ENCODE measurements at regions of chr5 and their contacts with region 1.

Region 1: DNA sequence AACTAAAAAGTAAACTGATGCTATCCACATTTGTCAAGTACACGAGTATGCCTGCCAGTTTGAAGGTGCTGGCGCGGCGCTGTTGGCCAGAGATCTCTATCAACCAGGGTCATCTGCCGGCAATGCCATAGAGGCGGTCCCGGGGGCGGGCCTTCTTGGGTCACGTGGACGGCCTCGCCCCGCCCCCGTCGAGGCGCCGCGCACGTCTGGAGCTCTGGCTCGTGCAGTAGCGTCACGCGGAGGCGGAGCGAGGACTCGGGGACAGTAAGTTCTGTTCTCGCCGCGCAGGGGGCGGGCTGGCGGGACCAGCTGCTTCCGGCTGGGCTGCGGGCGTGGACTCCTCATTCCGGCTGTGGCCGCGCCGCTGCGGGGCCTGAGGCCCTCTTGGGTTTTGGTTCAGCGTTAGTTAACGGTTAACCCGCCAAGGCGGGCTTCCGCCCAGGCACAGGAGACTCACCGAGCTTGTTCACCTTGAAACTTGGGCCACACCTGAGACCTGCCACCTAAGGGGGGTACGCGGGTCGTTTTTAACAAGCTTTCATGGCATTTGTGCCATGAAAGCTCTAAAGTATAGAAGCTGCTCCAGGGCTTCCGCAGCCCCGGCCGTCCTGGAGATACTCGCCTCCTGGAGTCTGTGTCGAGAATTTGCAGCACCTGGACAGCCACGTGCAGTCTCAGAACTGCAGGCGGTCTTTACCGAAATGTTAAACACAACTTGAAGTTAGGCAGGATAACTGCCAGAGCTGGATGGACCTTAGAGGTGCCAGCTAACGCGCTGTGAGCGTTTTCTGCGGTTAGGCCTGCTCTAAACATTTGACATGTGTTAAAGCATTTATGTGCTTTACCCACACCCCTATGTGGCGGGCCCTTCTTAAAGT is at the start of gene RFESD:
- DNase-seq: peak; percentile 98 to 100
- ATAC-seq: peak; percentile 82 to 83
- H3K4me3 ChIP-seq: peak within 1 kb of the TSS; percentile 62 to 71 (median 66)
- H3K27ac ChIP-seq: peak within 1 kb of the TSS; percentile 95 to 99 (median 97)
- H3K4me1 ChIP-seq: peaks cover 16 to 39% of the 10 kb centered on the region in 2 donors
- H3K27me3 ChIP-seq: no peaks in the 10 kb centered on the region
- CTCF ChIP-seq: peak in 2 of 5 experiments; percentile 19 to 29
- POLR2A ChIP-seq: peak; percentile 96 to 98
- total RNA-seq, gene RFESD: 0.89 to 2.9 (median 1.6) TPM

Region 2: GRCh38 chr5:95486191-95486590 is 160.6 kb before region 1 on chr5:
- in situ Hi-C with region 1: no loop called
- intact Hi-C with region 1: no loop called
- DNase-seq: no peak
- ATAC-seq: no peak
- H3K4me3 ChIP-seq: no peak overlapping the region
- H3K27ac ChIP-seq: no peak overlapping the region
- H3K4me1 ChIP-seq: no peaks in the 10 kb centered on the region
- H3K27me3 ChIP-seq: no peaks in the 10 kb centered on the region
- CTCF ChIP-seq: no peak
- POLR2A ChIP-seq: no peak

Region 3: GRCh38 chr5:95697781-95698681 is 51.2 kb after region 1 on chr5:
- in situ Hi-C with region 1: no loop called
- intact Hi-C with region 1: no loop called
- DNase-seq: no peak
- ATAC-seq: no peak
- H3K4me3 ChIP-seq: no peak overlapping the region
- H3K27ac ChIP-seq: no peak overlapping the region
- H3K4me1 ChIP-seq: no peaks in the 10 kb centered on the region
- H3K27me3 ChIP-seq: no peaks in the 10 kb centered on the region
- CTCF ChIP-seq: no peak
- POLR2A ChIP-seq: no peak

Region 4: DNA sequence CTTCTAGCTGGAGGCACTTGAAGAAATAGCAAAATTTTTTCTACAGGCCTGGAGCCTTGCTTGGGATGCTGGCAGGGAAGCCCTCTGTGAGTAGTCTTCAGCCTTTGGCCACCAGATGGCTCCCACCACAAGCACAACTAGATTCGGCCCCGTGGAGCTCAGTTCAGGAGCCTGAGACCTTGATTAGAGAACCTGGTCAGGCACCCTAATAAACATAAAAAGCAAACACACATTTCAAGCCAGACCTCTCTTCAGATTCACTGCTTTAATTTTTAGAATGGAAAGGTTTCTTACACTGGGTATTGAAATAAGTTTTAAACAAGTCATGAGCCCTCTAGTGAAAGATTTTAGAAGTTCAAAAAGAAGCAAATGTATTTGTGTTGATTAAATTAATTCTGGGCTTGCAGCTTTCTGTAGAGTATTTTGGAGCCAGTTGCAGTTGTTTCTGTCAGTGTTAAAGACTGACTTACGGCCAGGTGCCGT is 134.3 kb after region 1 on chr5:
- in situ Hi-C with region 1: no loop called
- intact Hi-C with region 1: loop called (anchors 2 kb)
- DNase-seq: peak; percentile 77 to 88
- ATAC-seq: peak; percentile 75 to 87
- H3K4me3 ChIP-seq: no peak overlapping the region
- H3K27ac ChIP-seq: peak overlapping the region; percentile 76 to 85 (median 83)
- H3K4me1 ChIP-seq: peaks cover 18 to 72% of the 10 kb centered on the region in 2 donors
- H3K27me3 ChIP-seq: no peaks in the 10 kb centered on the region
- CTCF ChIP-seq: peak; percentile 87 to 95 (median 89)
- POLR2A ChIP-seq: no peak

Region 5: DNA sequence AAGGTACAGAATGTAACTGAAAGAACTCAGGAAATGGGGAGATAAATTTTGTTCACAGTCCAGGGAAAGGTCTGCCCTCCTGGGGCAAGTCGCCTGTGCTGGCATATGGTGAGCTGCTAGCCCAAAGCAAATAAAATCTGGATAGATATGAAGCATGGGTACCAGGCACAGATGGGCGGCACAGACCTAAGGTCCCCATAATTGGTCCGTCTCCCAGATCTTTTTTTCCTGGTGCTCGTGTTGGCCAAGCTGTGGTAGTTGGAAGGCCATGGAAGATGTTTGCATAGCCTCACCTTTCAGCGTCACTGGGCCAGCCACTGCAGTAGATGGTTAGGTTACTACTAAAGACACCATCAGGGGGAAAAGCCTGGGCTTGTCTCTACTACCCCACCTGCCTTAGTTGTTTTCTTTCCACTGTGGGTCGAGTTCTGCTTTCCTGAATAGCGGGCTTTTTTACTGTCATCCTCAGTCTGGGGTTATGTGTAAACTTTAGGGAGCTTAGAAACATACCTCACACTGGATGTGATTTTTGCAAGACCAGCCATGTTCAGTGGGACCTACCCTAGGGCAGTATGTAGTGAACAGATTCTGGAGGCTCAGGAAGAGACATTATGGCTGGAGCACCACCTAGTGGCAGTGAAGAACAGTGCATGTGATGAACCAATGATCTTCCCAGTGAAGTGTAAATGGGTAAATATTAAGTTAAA is 199.9 kb after region 1 on chr5:
- in situ Hi-C with region 1: no loop called
- intact Hi-C with region 1: loop called (anchors 2 kb)
- DNase-seq: peak in 1 of 2 donors; percentile 68
- ATAC-seq: peak; percentile 43 to 56
- H3K4me3 ChIP-seq: peak overlapping the region in 3 of 4 donors; percentile 8 to 59 (median 52)
- H3K27ac ChIP-seq: peak overlapping the region; percentile 84 to 92 (median 88)
- H3K4me1 ChIP-seq: peaks cover 19 to 30% of the 10 kb centered on the region in 2 donors
- H3K27me3 ChIP-seq: no peaks in the 10 kb centered on the region
- CTCF ChIP-seq: peak; percentile 92 to 97 (median 94)
- POLR2A ChIP-seq: no peak

Region 6: DNA sequence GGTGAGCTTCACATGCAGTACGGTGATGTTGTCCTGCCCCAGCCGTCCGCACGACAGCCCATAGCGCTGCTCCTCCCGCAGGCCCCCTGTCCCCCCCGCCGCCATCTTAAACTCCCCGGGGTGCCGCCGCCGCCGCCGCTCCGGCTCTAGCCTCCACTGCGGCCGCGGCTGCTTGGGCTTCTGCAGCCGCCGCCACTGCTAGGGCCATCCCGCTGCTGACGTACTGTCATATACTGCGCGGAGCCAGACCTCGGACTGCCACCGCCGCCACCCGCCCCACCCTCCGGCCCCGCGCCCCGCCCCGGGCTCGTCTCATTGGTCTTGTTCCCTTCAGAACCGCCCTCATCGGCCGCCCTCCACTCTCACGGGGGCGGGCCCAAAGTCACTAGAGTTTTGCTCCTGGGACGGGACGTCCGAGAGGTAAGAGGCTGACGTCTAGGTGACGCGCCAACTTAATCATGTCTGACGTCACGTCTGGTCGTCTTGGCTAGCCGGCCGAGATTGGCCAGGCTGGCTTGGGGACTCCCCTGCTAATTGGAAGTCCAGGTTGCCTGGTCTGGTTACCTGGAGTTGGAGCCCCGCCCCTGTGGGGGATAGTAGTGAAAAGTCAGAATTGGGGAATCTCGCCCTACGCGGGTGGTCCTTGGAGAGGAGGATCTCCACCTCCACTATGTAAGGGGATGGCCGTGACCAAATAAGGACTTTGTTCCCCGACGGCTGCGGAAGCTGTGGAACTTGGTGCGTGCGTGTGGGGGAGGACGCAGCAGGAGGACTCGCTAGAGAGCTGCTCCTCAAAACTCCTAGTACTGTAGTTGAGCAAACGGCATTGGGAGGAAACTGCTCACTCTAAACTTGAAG is 315.1 kb after region 1 on chr5 and contains the start of gene ELL2:
- in situ Hi-C with region 1: loop called in 2 of 4 experiments (anchors 25 kb)
- intact Hi-C with region 1: loop called (anchors 2 kb)
- DNase-seq: peak; percentile 96 to 98
- ATAC-seq: peak; percentile 77 to 80
- H3K4me3 ChIP-seq: peak within 1 kb of the TSS; percentile 76 to 97 (median 89)
- H3K27ac ChIP-seq: peak within 1 kb of the TSS; percentile 91 to 99 (median 98)
- H3K4me1 ChIP-seq: peaks cover 17 to 26% of the 10 kb centered on the region in 2 donors
- H3K27me3 ChIP-seq: no peaks in the 10 kb centered on the region
- CTCF ChIP-seq: no peak
- POLR2A ChIP-seq: peak; percentile 91 to 95
- total RNA-seq, gene ELL2: 35.2 to 64.5 (median 42.9) TPM

Region 7: GRCh38 chr5:96601811-96602244 is 955.0 kb after region 1 on chr5:
- in situ Hi-C with region 1: no loop called
- intact Hi-C with region 1: loop called (anchors 10 kb)
- DNase-seq: peak in 1 of 2 donors; percentile 22
- ATAC-seq: peak; percentile 87 to 90
- H3K4me3 ChIP-seq: no peak overlapping the region
- H3K27ac ChIP-seq: no peak overlapping the region
- H3K4me1 ChIP-seq: no peaks in the 10 kb centered on the region
- H3K27me3 ChIP-seq: no peaks in the 10 kb centered on the region
- CTCF ChIP-seq: peak; percentile 63 to 86 (median 75)
- POLR2A ChIP-seq: no peak

Region 8: DNA sequence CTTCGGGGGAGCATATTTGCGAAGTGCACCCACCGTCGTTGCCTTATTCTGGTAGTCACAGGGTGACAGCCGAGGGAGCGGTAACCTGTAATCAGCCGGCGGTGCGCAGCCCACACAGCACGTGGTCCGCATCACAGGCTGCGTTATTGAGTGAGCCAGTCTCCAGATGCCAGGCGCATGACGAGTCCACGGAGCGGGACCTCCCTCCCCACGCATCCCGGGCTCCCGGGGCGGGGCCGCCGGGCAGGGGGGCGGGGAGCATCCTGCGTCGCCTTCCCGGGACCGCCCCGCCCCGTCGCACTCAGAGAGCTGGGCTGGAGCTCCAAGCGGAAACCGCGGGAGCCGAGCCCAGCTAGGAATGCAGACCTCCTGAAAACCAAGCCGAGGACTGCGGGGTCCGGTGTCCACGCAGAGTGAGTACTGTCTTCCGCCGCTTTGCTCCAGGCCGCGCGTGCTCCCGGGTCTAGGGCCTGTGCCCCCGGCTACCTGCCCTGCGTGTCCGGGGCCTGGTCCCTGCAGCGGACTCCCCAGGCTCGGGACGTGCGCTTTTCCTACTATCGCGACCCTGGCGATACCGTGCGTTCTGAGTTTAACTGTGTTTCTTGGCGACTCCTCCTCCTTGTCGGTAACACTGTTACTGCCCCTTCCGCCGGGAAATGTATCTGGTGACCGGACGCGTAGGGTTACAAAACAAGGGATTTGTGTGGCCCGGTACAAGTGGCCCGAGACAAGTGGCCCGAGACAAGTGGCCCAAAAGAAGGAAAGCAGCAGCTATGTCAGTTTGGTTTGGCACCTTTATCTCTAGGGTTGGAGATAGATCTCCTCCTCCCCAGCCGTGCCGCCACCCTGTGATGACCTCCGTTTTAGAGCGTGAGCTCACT is 1056.0 kb after region 1 on chr5:
- in situ Hi-C with region 1: no loop called
- intact Hi-C with region 1: loop called (anchors 5 kb)
- DNase-seq: peak; percentile 97 to 98
- ATAC-seq: peak; percentile 49 to 68
- H3K4me3 ChIP-seq: peak overlapping the region; percentile 63 to 87 (median 79)
- H3K27ac ChIP-seq: peak overlapping the region; percentile 94 to 99 (median 98)
- H3K4me1 ChIP-seq: peaks cover 38 to 75% of the 10 kb centered on the region in 2 donors
- H3K27me3 ChIP-seq: no peaks in the 10 kb centered on the region
- CTCF ChIP-seq: no peak
- POLR2A ChIP-seq: peak; percentile 90 to 93

Measured in gastrocnemius medialis (tissue), 4 donors.